ENCODE measurements at regions of chr5 and their contacts with region 1.

Region 1: GRCh38 chr5:94111209-94112004 is 370.0 kb upstream of the POU5F2 start:
- DNase-seq: peak; percentile 84 to 93
- ATAC-seq: peak; percentile 97 to 98
- H3K4me3 ChIP-seq: peak overlapping the region; percentile 77 to 93 (median 83)
- H3K27ac ChIP-seq: peak overlapping the region; percentile 81 to 93 (median 88)
- H3K4me1 ChIP-seq: peaks cover 3 to 8% of the 10 kb centered on the region in 2 donors
- H3K27me3 ChIP-seq: no peaks in the 10 kb centered on the region
- CTCF ChIP-seq: peak in 2 of 5 experiments; percentile 28 to 32
- POLR2A ChIP-seq: peak; percentile 42 to 54

Region 2: DNA sequence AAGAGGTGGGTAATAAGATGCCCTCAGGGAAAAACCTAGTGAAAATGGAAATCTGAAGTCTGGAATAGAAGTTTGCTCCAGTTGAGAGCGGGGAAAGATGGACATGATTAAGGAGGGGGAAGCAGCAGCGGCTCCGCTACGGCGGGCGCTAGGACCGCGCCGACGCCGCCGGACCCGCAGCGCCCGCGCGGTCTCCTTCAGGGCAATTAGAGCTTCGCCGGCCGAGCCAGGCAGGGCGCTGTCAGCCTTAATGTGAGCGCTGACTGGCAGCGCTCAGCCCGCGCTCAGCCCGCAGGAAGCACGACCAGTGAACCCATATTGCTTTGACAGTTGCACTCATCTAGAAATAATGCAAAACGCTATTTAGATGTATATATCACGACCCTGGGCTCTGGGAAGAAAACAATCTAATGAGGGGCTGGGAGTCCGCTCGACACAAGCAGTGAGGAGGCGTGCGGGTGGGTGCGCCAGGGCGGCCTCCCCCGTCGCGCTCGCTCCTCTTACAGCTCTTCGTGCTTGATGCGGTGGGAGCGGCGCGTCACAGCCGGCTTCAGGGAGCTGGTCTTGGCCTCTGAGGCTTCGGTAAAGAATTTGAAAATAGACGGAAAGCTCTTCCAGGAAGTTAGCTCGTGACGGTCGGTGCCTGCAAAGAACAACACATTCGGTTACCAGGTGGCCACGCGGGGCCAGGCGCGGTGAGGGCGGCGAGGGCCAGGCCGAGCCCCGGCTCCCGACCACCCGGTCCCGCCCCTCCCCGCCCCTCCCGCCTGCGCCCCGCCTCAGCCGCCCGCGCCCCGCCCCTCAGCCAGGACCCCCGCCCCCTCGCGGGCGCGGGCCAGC is 490.7 kb before region 1 on chr5:
- in situ Hi-C with region 1: loop called in 1 of 4 experiments (anchors 25 kb)
- intact Hi-C with region 1: no loop called
- DNase-seq: no peak
- ATAC-seq: peak; percentile 75 to 79
- H3K4me3 ChIP-seq: peak overlapping the region; percentile 71 to 81 (median 74)
- H3K27ac ChIP-seq: peak overlapping the region; percentile 58 to 63 (median 60)
- H3K4me1 ChIP-seq: peaks cover 0 to 10% of the 10 kb centered on the region in 2 donors
- H3K27me3 ChIP-seq: peaks cover 0 to 6% (median 6%) of the 10 kb centered on the region in 3 donors
- CTCF ChIP-seq: no peak
- POLR2A ChIP-seq: no peak

Region 3: DNA sequence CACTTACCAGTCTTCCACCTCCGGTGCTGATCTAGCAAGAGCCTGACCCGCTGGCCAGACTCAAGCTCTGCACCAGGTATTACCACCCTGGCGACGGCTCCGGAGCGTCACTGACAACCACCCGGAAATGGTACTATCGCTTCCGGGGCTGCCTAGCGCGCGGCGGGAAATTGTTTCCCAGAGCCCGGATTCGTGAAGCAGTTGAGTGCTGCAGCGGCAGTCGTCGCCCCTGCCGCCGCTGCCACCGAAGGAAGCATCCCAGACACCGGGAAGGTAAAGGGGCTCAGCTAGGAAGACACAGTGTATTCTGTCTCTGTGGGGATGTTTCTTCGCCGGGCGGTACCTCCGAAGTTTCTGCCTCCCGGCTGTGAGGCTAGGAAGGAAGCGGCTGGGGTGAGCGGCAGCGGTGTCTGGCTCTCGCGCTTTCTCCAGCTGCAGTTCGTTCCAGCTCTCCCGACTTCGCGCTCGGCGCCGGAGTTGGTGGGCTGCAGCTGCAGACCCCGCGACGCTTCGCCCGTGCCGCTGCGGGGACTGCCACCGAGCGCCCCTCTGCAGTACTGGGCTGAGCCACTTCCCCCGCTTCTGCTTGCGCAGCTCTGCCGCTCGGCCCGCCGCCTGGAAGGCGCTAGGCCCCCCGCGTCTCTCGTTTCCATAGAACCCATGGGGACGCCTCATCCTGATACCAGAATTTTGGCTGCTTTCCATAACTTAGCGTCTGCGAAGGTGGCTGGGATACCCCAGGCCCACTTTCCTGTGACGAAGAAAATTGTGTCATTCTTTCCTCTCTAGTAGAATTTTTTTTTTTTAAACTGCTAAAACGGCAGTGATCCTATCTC is 507.3 kb after region 1 on chr5 and contains the starts of genes KIAA0825 and SLF1:
- in situ Hi-C with region 1: no loop called
- intact Hi-C with region 1: loop called (anchors 5 kb)
- DNase-seq: peak; percentile 72 to 79
- ATAC-seq: peak; percentile 97 to 98
- H3K4me3 ChIP-seq: peak within 1 kb of the TSS; percentile 83 to 90 (median 86)
- H3K27ac ChIP-seq: peak within 1 kb of the TSS; percentile 74 to 85 (median 78)
- H3K4me1 ChIP-seq: peaks cover 13 to 15% of the 10 kb centered on the region in 2 donors
- H3K27me3 ChIP-seq: no peaks in the 10 kb centered on the region
- CTCF ChIP-seq: peak in 1 of 5 experiments; percentile 14
- POLR2A ChIP-seq: no peak
- total RNA-seq, gene KIAA0825: 0.60 to 2.5 (median 1.6) TPM
- total RNA-seq, gene SLF1: 1.0 to 2.6 (median 1.9) TPM

Measured in gastrocnemius medialis (tissue), 4 donors.